ENCODE measurements at regions of chr1 and their contacts with region 1.

Region 1: DNA sequence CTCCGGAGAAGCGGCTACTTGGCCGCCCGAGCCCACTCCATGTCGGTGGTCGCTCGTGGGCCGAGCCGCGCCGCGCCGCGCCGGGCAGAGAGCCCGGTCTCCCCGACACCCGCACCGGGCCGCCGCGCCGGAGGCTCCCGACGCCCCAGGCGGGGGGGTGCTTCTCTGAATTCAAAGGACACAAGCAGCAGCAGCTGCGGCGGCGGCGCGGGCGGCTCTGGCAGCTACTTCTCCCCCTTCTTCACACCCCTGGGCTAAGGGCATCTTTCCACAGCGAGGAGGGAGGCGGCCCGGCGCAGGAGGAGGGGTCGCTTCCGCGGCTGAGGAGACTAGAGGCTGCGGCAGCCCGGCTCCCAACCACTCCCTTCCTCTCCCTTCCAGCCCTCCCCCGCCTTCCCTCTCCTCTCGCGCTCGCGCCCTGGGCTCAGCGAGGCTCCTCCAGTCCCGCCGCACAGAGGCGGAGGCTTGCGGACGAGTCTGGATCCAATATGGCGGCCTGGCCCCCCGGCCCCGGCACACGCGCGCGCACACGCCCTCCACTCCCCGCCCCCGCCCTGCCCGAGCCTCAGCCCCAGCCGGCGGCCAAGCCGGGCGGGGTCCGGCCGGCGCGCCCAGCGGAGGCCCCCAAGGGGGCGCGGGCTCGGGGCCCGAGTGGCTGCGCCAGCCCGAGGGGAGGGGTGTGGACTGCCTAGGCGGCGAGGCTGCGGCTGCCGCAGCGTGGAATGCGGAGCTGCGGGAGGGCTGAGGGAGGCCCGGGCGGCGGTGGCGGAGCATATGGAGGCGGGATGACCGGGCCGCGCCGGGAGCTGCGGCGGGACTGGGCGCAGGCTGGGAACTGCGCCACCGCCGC is at the start of gene CDC42BPA:
- DNase-seq: peak; percentile 57 to 73
- ATAC-seq: peak; percentile 62 to 77
- H3K4me3 ChIP-seq: peak within 1 kb of the TSS; percentile 77 to 93 (median 86)
- H3K27ac ChIP-seq: peak within 1 kb of the TSS; percentile 92 to 97 (median 94)
- H3K4me1 ChIP-seq: peaks cover 5 to 14% of the 10 kb centered on the region in 2 donors
- H3K27me3 ChIP-seq: no peaks in the 10 kb centered on the region
- CTCF ChIP-seq: no peak
- POLR2A ChIP-seq: peak; percentile 35 to 39
- total RNA-seq, gene CDC42BPA: 13.9 to 30.6 (median 16.6) TPM

Region 2: DNA sequence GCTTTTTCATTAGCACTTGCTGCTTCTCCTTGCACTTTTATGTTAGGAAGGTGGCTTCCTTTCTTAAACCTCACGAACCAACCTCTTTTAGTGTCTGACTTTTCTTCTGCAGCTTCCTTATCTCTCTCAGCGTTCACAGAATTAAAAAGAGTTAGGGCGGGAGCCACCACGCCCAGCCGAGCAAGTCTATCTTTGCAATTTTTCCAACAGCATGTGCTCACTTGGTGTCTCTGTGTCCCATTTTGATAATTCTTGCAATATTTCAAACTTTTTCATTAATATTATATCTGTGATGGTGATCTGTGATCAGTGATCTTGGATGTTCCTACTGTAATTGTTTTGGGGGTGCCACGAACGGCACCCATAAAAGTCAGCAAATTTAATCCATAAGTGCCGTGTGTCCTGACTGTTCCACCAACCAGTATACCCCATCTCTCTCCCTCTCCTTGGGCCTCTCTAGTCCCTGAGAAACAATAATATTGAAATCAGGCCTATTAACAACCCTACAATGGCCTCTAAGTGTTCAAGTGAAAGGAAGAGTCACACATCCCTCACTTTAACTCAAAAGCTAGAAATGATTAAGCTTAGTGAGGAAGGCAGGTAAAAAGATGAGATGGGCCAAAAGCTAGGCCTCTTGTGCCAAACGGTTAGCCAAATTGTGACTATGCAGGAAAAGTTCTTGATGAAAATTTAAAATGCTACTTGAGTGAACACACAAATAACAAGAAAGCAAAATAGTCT is 563.3 kb before region 1 on chr1:
- in situ Hi-C with region 1: no loop called
- intact Hi-C with region 1: no loop called
- DNase-seq: no peak
- ATAC-seq: no peak
- H3K4me3 ChIP-seq: no peak overlapping the region
- H3K27ac ChIP-seq: no peak overlapping the region
- H3K4me1 ChIP-seq: no peaks in the 10 kb centered on the region
- H3K27me3 ChIP-seq: no peaks in the 10 kb centered on the region
- CTCF ChIP-seq: no peak
- POLR2A ChIP-seq: no peak

Region 3: GRCh38 chr1:226912587-226913176 is 405.5 kb before region 1 on chr1:
- in situ Hi-C with region 1: no loop called
- intact Hi-C with region 1: loop called (anchors 5 kb)
- DNase-seq: peak; percentile 65 to 83
- ATAC-seq: peak; percentile 63 to 93
- H3K4me3 ChIP-seq: no peak overlapping the region
- H3K27ac ChIP-seq: peak overlapping the region in 3 of 4 donors; percentile 38 to 84 (median 39)
- H3K4me1 ChIP-seq: peaks cover 0 to 31% of the 10 kb centered on the region in 2 donors
- H3K27me3 ChIP-seq: no peaks in the 10 kb centered on the region
- CTCF ChIP-seq: peak; percentile 66 to 87 (median 81)
- POLR2A ChIP-seq: no peak

Region 4: GRCh38 chr1:226990133-226990716 is 328.0 kb before region 1 on chr1:
- in situ Hi-C with region 1: no loop called
- intact Hi-C with region 1: loop called (anchors 10 kb)
- DNase-seq: peak; percentile 41 to 65
- ATAC-seq: peak; percentile 26 to 36
- H3K4me3 ChIP-seq: no peak overlapping the region
- H3K27ac ChIP-seq: peak overlapping the region; percentile 89 to 99 (median 99)
- H3K4me1 ChIP-seq: peaks cover 40 to 47% of the 10 kb centered on the region in 2 donors
- H3K27me3 ChIP-seq: no peaks in the 10 kb centered on the region
- CTCF ChIP-seq: no peak
- POLR2A ChIP-seq: no peak

Region 5: DNA sequence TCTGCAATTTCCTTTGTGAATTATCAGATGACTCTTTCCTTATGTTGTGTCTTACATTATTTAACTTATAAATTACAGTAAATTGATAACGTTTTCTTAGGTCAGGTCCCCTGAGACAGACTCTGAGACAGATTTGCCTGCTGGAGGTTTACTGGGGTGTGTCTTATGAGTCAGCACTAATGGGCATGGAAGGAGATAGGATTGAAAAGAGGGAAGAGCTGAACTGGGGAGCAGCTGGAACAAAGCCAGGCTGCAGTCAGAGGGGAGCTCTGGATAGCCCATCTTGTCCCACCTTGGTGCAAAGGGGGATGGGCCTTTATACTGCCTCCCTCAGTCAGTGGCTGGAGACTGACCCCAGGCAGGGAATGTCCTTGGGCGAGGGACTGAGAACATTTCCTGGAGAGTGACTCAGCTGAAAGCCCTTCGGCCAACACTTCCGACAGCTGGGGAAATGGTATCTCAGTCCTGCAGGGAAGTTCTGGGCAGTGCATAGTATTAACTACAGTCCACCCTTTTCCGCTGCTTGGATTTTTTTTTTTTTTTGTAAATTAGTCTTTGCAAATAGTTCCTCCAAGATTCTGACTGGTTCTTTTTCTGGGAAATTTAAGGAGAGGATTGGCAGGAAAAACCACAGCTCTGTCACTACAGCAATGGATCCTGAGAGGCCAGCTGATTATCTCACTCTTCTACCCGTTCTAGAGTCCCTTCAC is 39.1 kb after region 1 on chr1:
- in situ Hi-C with region 1: no loop called
- intact Hi-C with region 1: loop called (anchors 5 kb)
- DNase-seq: peak; percentile 47 to 75
- ATAC-seq: peak; percentile 99
- H3K4me3 ChIP-seq: no peak overlapping the region
- H3K27ac ChIP-seq: peak overlapping the region; percentile 33 to 79 (median 70)
- H3K4me1 ChIP-seq: peaks cover 12 to 20% of the 10 kb centered on the region in 2 donors
- H3K27me3 ChIP-seq: no peaks in the 10 kb centered on the region
- CTCF ChIP-seq: no peak
- POLR2A ChIP-seq: no peak

Region 6: DNA sequence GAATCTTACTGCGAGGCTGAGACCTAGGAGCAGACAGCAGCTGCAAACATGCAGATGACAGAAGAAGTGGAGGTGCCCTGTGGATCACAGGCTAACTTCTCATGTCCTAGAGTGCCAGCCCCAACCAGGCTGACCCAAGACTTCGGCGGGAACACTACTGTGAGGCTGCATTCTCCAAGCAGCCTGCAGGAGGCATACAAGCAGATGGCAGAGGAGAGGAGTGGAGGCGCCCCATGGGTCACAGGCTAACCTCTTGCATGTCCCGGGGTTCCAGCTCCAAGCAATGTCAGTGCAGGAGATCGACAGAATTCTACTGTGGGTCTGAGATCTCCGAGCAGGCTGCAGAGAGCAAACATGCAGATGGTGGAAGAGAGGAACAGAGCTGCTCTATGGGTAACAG is 147.0 kb after region 1 on chr1:
- in situ Hi-C with region 1: no loop called
- intact Hi-C with region 1: no loop called
- DNase-seq: no peak
- ATAC-seq: no peak
- H3K4me3 ChIP-seq: no peak overlapping the region
- H3K27ac ChIP-seq: no peak overlapping the region
- H3K4me1 ChIP-seq: no peaks in the 10 kb centered on the region
- H3K27me3 ChIP-seq: no peaks in the 10 kb centered on the region
- CTCF ChIP-seq: no peak
- POLR2A ChIP-seq: no peak

Measured in gastrocnemius medialis (tissue), 4 donors.